RWPE1 (cell line): ENCODE measurements at regions of chr9 and their contacts with region 1.

Region 1: GRCh38 chr9:5817869-5818268 is 15.0 kb downstream of the ERMP1 start:
- DNase-seq: peak; percentile 4
- H3K27ac ChIP-seq: no peak overlapping the region
- CTCF ChIP-seq: no peak

Region 2: GRCh38 chr9:5843794-5844504 is 26.1 kb after region 1 on chr9:
- CTCF ChIA-PET with region 1: no interaction called
- POLR2A ChIA-PET with region 1: no interaction called
- DNase-seq: no peak
- H3K27ac ChIP-seq: no peak overlapping the region; the same call in 1 of the 2 replicates
- CTCF ChIP-seq: no peak

Region 3: DNA sequence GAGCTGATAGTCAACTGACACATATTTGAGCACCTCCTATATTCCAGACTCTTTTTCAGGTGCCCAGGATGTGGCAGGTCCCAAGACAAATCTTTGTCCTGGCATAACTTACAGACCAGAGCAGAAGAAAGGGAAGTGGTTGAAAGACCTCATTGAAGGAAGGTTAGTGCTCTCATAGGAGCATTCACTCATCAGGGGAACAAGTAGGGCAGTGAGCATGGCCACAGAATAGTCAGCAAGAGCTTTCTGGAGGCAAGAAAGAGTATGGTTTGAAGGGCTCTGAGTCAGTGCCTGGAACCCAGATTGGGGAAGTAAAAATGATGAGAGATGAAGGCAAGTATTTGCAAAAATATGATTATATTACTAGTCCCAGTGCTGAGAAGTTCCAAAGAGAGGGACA is 40.1 kb after region 1 on chr9:
- CTCF ChIA-PET with region 1: no interaction called
- POLR2A ChIA-PET with region 1: interaction called, 11 read pairs
- DNase-seq: no peak
- H3K27ac ChIP-seq: no peak overlapping the region
- CTCF ChIP-seq: no peak